B cell (primary cell): ENCODE measurements at regions of chr6 and their contacts with region 1.

Region 1: GRCh38 chr6:11144393-11144851 is 32.9 kb upstream of the ERVFRD-1 start:
- DNase-seq: peak; percentile 77
- ATAC-seq: peak; percentile 80
- H3K4me3 ChIP-seq: no peak overlapping the region
- H3K4me3 Mint-ChIP-seq: no peak overlapping the region
- H3K27ac ChIP-seq: no peak overlapping the region
- H3K27ac Mint-ChIP-seq: no peak overlapping the region
- H3K4me1 ChIP-seq: peaks cover 0 to 5% of the 10 kb centered on the region in 2 donors
- H3K4me1 Mint-ChIP-seq: peaks cover 7% of the 10 kb centered on the region
- H3K27me3 ChIP-seq: no peaks in the 10 kb centered on the region
- H3K27me3 Mint-ChIP-seq: no peaks in the 10 kb centered on the region
- CTCF ChIP-seq: peak; percentile 94

Region 2: GRCh38 chr6:11155589-11155988 is 11.2 kb after region 1 on chr6:
- CTCF ChIA-PET with region 1: interaction called, 10 read pairs
- POLR2A ChIA-PET with region 1: no interaction called
- intact Hi-C with region 1: no loop called
- DNase-seq: no peak
- ATAC-seq: no peak
- H3K4me3 ChIP-seq: no peak overlapping the region
- H3K4me3 Mint-ChIP-seq: no peak overlapping the region
- H3K27ac ChIP-seq: no peak overlapping the region
- H3K27ac Mint-ChIP-seq: no peak overlapping the region
- H3K4me1 ChIP-seq: no peaks in the 10 kb centered on the region
- H3K4me1 Mint-ChIP-seq: peaks cover 8% of the 10 kb centered on the region
- H3K27me3 ChIP-seq: no peaks in the 10 kb centered on the region
- H3K27me3 Mint-ChIP-seq: no peaks in the 10 kb centered on the region
- CTCF ChIP-seq: no peak